ENCODE measurements at regions of chr12 and their contacts with region 1.

Region 1: GRCh38 chr12:96108321-96108720 is 72.9 kb upstream of the LTA4H start:
- DNase-seq: peak; percentile 66 to 75 (median 72)
- ATAC-seq: peak; percentile 49 to 91 (median 88)
- H3K4me3 ChIP-seq: peak overlapping the region in 3 of 12 donors; percentile 8 to 18 (median 13)
- H3K27ac ChIP-seq: peak overlapping the region; percentile 48 to 88 (median 76)
- H3K4me1 ChIP-seq: peaks cover 0 to 24% (median 8%) of the 10 kb centered on the region in 12 donors
- H3K27me3 ChIP-seq: no peaks in the 10 kb centered on the region
- CTCF ChIP-seq: no peak
- POLR2A ChIP-seq: no peak

Region 2: DNA sequence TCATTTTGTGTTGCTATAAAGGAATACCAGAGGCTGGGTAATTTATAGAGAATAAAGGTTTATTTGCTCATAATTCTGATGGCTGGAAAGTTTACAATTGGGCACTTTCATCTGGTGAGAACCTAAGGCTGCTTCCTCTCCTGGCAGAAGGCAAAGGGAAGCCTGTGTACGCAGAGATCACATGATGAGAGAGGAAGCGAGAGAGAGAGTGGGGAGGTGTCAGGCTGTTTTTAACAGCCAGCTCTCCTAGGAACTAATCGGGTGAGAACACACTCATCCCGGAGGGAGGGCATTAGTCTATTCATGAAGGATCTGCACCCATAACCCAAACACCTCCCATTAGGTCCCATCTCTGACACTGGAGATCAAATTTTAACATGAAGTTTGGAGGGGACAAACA is 679.8 kb before region 1 on chr12:
- intact Hi-C with region 1: no loop called
- DNase-seq: peak in 4 of 5 donors; percentile 30 to 44 (median 42)
- ATAC-seq: peak; percentile 86 to 97 (median 96)
- H3K4me3 ChIP-seq: no peak overlapping the region
- H3K27ac ChIP-seq: peak overlapping the region in 9 of 12 donors; percentile 9 to 73 (median 42)
- H3K4me1 ChIP-seq: peaks cover 0 to 16% (median 6%) of the 10 kb centered on the region in 12 donors
- H3K27me3 ChIP-seq: no peaks in the 10 kb centered on the region
- CTCF ChIP-seq: no peak
- POLR2A ChIP-seq: no peak

Region 3: DNA sequence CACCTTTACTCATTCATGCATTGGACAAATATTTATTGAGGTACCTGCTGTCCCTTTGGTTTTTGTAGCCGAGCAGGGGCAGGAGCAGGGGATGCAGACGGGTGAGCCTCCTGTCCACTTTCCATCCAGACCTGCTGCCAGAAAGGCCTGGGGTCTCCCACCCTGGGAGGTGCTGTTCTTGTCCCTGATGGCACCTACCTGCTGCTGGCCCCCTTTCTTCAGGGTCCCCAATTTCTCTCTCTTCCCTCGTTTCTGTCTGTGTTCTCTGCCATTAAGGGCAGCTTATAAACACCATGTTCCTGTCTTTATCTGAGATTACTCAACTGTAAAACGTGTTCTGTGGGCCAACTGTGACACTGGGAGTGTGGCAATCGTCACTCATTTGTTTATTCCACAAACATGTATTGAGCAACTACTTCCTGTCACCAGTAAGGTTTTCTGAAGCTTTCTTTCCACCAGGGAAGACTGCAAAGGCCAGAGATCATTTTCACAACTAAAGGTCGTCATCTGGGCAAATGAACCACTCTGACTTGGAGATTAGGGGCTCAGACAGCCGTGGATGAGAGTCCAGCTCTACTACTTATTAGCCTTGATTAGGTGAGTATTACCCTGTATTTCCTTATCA is 112.2 kb before region 1 on chr12 and contains the start of gene HAL:
- intact Hi-C with region 1: no loop called
- DNase-seq: no peak
- ATAC-seq: peak in 2 of 4 donors; percentile 28 to 58
- H3K4me3 ChIP-seq: no peak within 1 kb of the TSS
- H3K27ac ChIP-seq: no peak within 1 kb of the TSS
- H3K4me1 ChIP-seq: peaks cover 0 to 4% (median 0%) of the 10 kb centered on the region in 12 donors
- H3K27me3 ChIP-seq: no peaks in the 10 kb centered on the region
- CTCF ChIP-seq: no peak
- POLR2A ChIP-seq: no peak
- total RNA-seq, gene HAL: 0.10 to 0.79 (median 0.31) TPM in 4 of 9 donors, not detected in the others

Region 4: GRCh38 chr12:96070670-96071279 is 37.5 kb before region 1 on chr12:
- intact Hi-C with region 1: loop called in 1 of 10 experiments (anchors 5 kb)
- DNase-seq: no peak
- ATAC-seq: peak; percentile 37 to 64 (median 48)
- H3K4me3 ChIP-seq: no peak overlapping the region
- H3K27ac ChIP-seq: peak overlapping the region in 7 of 12 donors; percentile 10 to 46 (median 39)
- H3K4me1 ChIP-seq: peaks cover 0 to 31% (median 9%) of the 10 kb centered on the region in 12 donors
- H3K27me3 ChIP-seq: peaks cover 0 to 4% (median 0%) of the 10 kb centered on the region in 9 donors
- CTCF ChIP-seq: peak in 4 of 12 donors; percentile 7 to 34 (median 26)
- POLR2A ChIP-seq: no peak

Region 5: DNA sequence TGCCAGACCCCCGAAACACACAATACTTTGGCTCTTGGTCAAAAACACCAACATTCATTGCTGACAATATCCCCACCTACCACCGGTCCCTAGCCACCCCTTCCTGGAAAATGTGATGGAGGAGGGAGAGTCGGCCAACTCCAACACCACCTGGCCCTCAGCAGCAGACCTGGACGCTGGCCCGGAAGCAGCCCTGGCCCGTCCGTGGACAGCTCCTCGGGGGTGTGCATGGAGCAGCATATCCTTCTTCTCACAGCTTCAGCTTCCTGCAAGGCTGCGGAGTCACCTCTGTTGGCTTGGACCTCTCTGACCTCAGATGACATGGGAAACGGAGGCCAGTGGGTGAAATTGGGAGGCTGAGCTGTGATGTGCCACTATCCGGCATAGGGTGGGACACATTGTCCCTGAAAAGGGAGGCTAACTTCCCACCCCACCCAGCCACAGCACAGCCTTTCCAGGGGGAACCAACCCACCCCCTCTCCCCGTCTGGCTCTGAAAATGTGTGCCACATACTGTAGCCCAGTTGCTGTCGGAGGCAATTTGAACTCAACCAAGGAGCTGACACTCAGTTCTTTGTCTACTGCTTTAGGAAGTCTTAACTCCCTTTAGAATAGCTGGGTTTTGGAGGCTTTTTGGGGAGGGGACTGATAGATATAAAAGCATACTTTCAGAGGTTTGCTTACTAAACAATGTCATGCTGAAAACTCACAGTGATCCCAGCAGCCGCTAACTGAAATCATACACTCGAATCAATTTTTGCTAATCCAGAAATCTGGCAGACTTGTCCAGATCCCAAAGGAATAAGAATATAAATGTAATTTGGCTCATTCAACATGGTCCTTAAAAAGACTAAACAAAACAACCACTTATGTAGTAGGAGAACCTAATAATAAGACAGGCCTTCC is 29.8 kb before region 1 on chr12:
- intact Hi-C with region 1: loop called in 2 of 10 experiments (anchors 2 to 5 kb)
- DNase-seq: peak; percentile 74 to 85 (median 83)
- ATAC-seq: peak; percentile 76 to 95 (median 90)
- H3K4me3 ChIP-seq: peak overlapping the region in 2 of 12 donors; percentile 10 to 13
- H3K27ac ChIP-seq: peak overlapping the region in 11 of 12 donors; percentile 18 to 83 (median 50)
- H3K4me1 ChIP-seq: peaks cover 0 to 35% (median 16%) of the 10 kb centered on the region in 12 donors
- H3K27me3 ChIP-seq: peaks cover 0 to 4% (median 0%) of the 10 kb centered on the region in 9 donors
- CTCF ChIP-seq: no peak
- POLR2A ChIP-seq: no peak

Region 6: GRCh38 chr12:96164951-96165811 is 56.9 kb after region 1 on chr12:
- intact Hi-C with region 1: loop called in 2 of 10 experiments (anchors 2 to 5 kb)
- DNase-seq: peak in 4 of 5 donors; percentile 45 to 63 (median 54)
- ATAC-seq: peak; percentile 75 to 87 (median 77)
- H3K4me3 ChIP-seq: no peak overlapping the region
- H3K27ac ChIP-seq: peak overlapping the region; percentile 47 to 95 (median 82)
- H3K4me1 ChIP-seq: peaks cover 0 to 49% (median 20%) of the 10 kb centered on the region in 12 donors
- H3K27me3 ChIP-seq: no peaks in the 10 kb centered on the region
- CTCF ChIP-seq: no peak
- POLR2A ChIP-seq: no peak